ENCODE measurements at regions of chr3 and their contacts with region 1.

Region 1: DNA sequence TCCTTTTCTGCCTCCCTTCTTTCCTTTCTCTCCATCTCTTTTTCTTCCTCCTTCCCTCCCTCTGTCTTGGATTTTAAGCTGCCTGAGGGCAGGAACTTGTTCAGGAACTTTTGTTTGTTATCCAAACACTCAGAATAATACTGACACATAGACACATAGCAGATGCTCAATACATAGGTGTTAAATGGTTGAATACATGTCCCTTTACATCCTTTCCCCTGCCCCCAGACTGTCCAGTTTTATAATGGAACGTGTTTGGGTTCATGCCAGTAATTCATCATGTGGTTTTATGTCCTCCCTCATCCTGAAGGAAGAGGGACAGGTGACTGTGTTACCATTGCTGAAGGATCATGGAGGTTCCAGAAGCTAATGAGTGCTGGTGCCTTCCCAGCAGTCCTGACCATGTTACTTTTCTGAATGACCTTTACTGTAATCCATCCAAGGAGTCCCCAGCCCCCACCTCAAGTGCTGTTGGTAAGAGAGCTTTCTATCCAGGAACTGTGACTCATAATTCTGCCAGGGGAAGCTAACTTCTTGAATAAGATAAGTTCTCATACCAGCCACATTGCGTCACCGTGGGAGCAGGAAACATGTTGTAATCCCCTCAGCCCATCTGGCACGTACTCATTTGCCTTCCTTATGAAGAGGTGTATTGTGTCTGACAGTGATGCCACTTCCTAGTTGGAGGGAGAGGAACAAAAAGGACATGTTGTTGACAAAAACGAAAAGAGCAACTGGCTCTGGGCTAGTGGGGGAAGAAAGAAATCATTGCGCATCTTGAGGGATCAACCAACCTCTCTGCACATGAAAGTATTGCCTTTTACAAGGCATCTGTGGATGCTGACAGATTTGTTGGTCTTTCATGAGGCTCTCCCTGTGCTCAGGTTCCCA is 52.4 kb downstream of the IL1RAP start:
- DNase-seq: peak; percentile 94
- H3K4me3 Mint-ChIP-seq: no peak overlapping the region
- H3K27ac Mint-ChIP-seq: peak overlapping the region; percentile 93
- H3K4me1 Mint-ChIP-seq: peaks cover 38% of the 10 kb centered on the region
- H3K27me3 Mint-ChIP-seq: no peaks in the 10 kb centered on the region

Region 2: DNA sequence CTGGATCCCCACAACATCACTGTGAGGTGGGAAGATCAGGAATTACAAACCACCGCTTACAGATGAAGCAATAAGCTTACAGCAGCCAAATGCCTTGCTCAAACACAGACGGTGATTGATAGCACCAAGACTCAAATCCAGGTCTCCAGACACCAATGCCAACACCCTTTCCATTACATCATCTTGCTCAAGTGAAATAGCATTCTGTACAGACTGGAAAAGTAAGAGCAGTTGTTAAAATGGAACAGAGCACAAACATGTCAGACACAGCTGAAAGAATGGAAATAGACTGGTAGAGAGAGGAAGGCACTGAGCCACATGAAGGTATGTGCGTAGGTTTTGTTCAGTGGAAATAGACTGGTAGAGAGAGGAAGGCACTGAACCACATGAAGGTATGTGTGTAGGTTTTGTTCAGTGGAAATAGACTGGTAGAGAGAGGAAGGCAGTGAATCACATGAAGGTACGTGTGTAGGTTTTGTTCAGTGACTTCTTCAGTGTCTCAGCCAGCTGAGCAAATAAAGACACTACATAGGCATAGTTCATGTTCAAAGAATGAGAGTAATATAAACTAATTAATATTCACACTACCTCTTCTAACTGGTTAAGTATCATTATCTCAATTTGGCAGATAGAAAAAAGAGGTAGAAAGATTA is 259.6 kb before region 1 on chr3:
- CTCF ChIA-PET with region 1: no interaction called
- intact Hi-C with region 1: loop called (anchors 2 kb)
- DNase-seq: peak; percentile 49
- H3K4me3 Mint-ChIP-seq: no peak overlapping the region
- H3K27ac Mint-ChIP-seq: peak overlapping the region; percentile 33
- H3K4me1 Mint-ChIP-seq: peaks cover 25% of the 10 kb centered on the region
- H3K27me3 Mint-ChIP-seq: no peaks in the 10 kb centered on the region

Region 3: DNA sequence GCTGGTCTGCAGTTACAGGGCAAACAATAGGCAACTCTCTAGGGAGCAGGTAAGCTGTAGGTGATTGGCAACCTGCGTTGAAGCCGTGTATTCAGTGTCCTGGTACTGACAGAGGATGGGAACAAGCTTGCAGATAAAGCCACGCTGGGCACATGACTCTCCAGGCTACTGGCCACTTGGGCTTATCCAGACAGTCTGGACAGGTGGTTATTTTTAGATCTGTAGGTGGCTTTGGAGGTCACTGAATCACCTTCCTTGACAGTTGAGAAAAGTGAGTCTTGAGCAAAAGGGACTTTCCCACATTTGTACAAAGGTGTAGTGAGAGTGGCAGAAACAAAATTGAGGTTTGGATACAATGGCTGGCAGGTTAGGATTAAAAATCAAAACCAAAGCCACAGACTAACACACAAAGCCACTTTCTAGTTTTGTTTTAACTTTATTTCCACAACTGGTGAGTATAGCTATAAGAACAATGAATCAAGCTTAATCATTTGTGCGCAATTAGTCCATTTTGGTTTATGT is 74.7 kb before region 1 on chr3:
- CTCF ChIA-PET with region 1: no interaction called
- intact Hi-C with region 1: loop called (anchors 1 kb)
- DNase-seq: peak; percentile 30
- H3K4me3 Mint-ChIP-seq: no peak overlapping the region
- H3K27ac Mint-ChIP-seq: no peak overlapping the region
- H3K4me1 Mint-ChIP-seq: peaks cover 24% of the 10 kb centered on the region
- H3K27me3 Mint-ChIP-seq: peaks cover 46% of the 10 kb centered on the region

Region 4: GRCh38 chr3:190577225-190577624 is 10.9 kb after region 1 on chr3:
- CTCF ChIA-PET with region 1: no interaction called
- intact Hi-C with region 1: loop called (anchors 1 kb)
- DNase-seq: no peak
- H3K4me3 Mint-ChIP-seq: no peak overlapping the region
- H3K27ac Mint-ChIP-seq: no peak overlapping the region
- H3K4me1 Mint-ChIP-seq: peaks cover 24% of the 10 kb centered on the region
- H3K27me3 Mint-ChIP-seq: no peaks in the 10 kb centered on the region

Region 5: DNA sequence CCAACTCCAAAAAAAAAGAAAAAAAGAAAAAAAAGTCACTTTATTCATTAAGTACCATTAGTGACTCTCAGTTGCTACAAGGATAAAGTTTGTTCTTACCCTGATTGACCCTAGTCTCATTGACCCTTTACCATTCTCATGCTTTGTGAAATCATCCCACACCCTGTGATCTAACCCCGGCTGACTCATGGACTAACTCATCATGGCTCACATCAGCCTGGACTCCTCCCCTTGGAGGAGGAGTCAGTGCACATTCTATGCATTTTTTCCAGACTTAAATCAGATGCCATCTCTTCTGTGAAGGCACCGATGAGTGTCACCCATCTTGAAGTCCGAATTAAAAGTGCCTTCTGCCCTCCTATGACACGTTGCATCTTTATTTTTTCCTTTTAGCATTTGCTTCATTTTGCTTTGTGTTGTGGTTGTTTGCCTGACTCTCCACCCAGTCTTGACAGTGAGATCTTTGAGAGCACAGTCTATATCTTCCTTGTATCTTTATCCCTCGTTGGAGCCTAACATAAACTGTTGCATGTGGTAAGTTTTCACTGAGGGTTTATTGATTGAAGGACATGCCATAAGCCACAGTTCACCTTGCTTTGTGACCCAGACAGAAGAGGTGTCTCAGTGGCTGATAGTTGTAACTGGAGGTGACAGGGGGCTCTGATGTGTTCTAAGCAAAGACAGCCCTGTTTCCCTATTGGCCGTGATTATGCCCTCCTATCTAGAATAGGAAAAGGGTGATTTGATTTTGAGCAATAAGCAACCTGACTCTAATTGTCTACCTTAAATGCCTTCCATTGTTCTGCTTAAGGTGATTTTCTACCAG is 19.7 kb after region 1 on chr3:
- CTCF ChIA-PET with region 1: interaction called, 3 read pairs
- intact Hi-C with region 1: loop called (anchors 1 kb)
- DNase-seq: peak; percentile 78
- H3K4me3 Mint-ChIP-seq: peak overlapping the region; percentile 50
- H3K27ac Mint-ChIP-seq: peak overlapping the region; percentile 88
- H3K4me1 Mint-ChIP-seq: peaks cover 37% of the 10 kb centered on the region
- H3K27me3 Mint-ChIP-seq: no peaks in the 10 kb centered on the region

Measured in activated naive CD4-positive, alpha-beta T cell treated with anti-CD3 and anti-CD28 coated beads for 36 hours (primary cell).